ENCODE measurements at regions of chr11 and their contacts with region 1.

Region 1: GRCh38 chr11:95095858-95096587 is 6.4 kb downstream of the ENDOD1 start:
- DNase-seq: no peak
- ATAC-seq: peak in 3 of 4 donors; percentile 60 to 75 (median 60)
- H3K4me3 ChIP-seq: peak overlapping the region in 1 of 12 donors; percentile 18
- H3K27ac ChIP-seq: peak overlapping the region in 3 of 12 donors; percentile 2 to 76 (median 26)
- H3K4me1 ChIP-seq: peaks cover 0 to 48% (median 18%) of the 10 kb centered on the region in 12 donors
- H3K27me3 ChIP-seq: no peaks in the 10 kb centered on the region
- CTCF ChIP-seq: no peak
- POLR2A ChIP-seq: no peak

Region 2: DNA sequence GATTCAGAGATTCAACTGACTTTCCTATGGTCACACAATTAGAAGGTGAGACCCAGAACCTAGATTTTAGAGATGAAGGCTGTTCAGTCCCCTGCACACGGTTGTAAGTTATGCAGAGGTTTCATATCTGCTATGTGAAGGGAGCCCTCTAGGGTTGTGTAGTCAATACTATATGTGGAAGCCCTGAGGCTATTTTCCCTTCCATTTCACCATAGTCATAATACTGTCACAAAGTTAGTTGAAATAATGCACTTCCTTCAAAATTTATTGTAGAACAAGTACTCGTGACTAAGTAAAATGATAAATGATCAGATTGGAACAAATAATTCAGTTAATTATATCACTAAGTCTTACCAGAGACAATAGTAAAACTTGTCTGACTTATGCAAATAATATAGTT is 42.4 kb after region 1 on chr11:
- intact Hi-C with region 1: loop called in 1 of 10 experiments (anchors 5 kb)
- DNase-seq: no peak
- ATAC-seq: peak in 2 of 4 donors; percentile 55 to 66
- H3K4me3 ChIP-seq: no peak overlapping the region
- H3K27ac ChIP-seq: no peak overlapping the region
- H3K4me1 ChIP-seq: peaks cover 0 to 12% (median 3%) of the 10 kb centered on the region in 12 donors
- H3K27me3 ChIP-seq: no peaks in the 10 kb centered on the region
- CTCF ChIP-seq: peak in 8 of 12 donors; percentile 8 to 43 (median 23)
- POLR2A ChIP-seq: no peak

Measured in heart left ventricle (tissue), 16 donors.